Endothelial cell of umbilical vein (primary cell): ENCODE measurements at regions of chr9 and their contacts with region 1.

Region 1: DNA sequence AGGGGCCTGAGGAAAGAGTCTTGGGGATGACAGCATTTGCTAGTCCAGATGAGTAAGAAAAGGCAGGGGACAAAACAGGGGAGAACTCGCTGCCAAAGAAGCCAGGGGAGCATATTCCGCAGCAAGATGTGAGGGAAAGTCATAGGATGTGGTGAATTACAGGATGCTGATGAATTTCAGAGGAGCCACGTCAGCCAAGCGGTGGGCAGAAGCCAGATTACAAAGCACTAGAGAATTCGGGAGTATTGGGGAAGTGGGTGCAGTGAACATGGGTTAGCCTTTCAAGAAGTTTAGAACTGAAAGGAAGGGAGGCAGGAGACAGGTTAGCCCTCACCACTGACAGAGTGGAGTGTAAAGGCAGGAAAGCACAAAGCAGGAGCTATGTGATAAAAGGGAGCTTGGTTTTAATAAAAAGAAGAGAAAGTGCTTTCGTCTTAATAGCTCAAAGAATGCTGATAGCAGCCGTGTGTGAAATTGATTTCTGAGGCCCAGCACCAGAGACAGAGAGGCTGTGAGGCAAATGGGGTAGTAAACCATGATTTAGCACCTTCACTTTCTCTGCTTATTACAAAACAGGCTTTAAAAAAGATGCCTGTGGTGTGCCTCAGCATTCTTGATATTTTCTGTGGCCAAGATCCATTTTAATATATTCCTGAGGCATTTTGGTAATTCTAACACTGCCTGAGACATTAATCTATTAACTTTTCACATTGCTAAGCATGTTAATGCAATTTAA is 16.9 kb downstream of the ADAMTSL1 start:
- DNase-seq: peak; percentile 96
- H3K4me3 ChIP-seq: peak overlapping the region in 2 of 3 experiments; percentile 8 to 25
- H3K27ac ChIP-seq: peak overlapping the region; percentile 96
- H3K4me1 ChIP-seq: peaks cover 50% of the 10 kb centered on the region
- H3K27me3 ChIP-seq: no peaks in the 10 kb centered on the region
- CTCF ChIP-seq: no peak
- POLR2A ChIP-seq: peak; percentile 31

Region 2: GRCh38 chr9:18255158-18255629 is 235.6 kb before region 1 on chr9:
- CTCF ChIA-PET with region 1: interaction called, 11 read pairs
- POLR2A ChIA-PET with region 1: no interaction called
- dilution Hi-C with region 1: no loop called
- intact Hi-C with region 1: no loop called
- DNase-seq: peak; percentile 84
- H3K4me3 ChIP-seq: no peak overlapping the region
- H3K27ac ChIP-seq: no peak overlapping the region
- H3K4me1 ChIP-seq: peaks cover 2% of the 10 kb centered on the region
- H3K27me3 ChIP-seq: no peaks in the 10 kb centered on the region
- CTCF ChIP-seq: peak; percentile 76 to 81
- POLR2A ChIP-seq: no peak

Region 3: GRCh38 chr9:18393340-18394130 is 97.3 kb before region 1 on chr9:
- CTCF ChIA-PET with region 1: interaction called, 3 read pairs
- POLR2A ChIA-PET with region 1: no interaction called
- dilution Hi-C with region 1: no loop called
- intact Hi-C with region 1: loop called (anchors 2 kb)
- DNase-seq: peak; percentile 98
- H3K4me3 ChIP-seq: no peak overlapping the region
- H3K27ac ChIP-seq: peak overlapping the region; percentile 98
- H3K4me1 ChIP-seq: peaks cover 44% of the 10 kb centered on the region
- H3K27me3 ChIP-seq: no peaks in the 10 kb centered on the region
- CTCF ChIP-seq: no peak
- POLR2A ChIP-seq: no peak

Region 4: GRCh38 chr9:18526685-18527084 is 35.9 kb after region 1 on chr9:
- CTCF ChIA-PET with region 1: no interaction called
- POLR2A ChIA-PET with region 1: no interaction called
- dilution Hi-C with region 1: no loop called
- intact Hi-C with region 1: no loop called
- DNase-seq: no peak
- H3K4me3 ChIP-seq: no peak overlapping the region
- H3K27ac ChIP-seq: no peak overlapping the region
- H3K4me1 ChIP-seq: no peaks in the 10 kb centered on the region
- H3K27me3 ChIP-seq: no peaks in the 10 kb centered on the region
- CTCF ChIP-seq: no peak
- POLR2A ChIP-seq: no peak

Region 5: GRCh38 chr9:18566121-18566520 is 75.3 kb after region 1 on chr9:
- CTCF ChIA-PET with region 1: interaction called, 3 read pairs
- POLR2A ChIA-PET with region 1: no interaction called
- dilution Hi-C with region 1: no loop called
- intact Hi-C with region 1: loop called (anchors 2 kb)
- DNase-seq: peak; percentile 92
- H3K4me3 ChIP-seq: no peak overlapping the region
- H3K27ac ChIP-seq: peak overlapping the region; percentile 72
- H3K4me1 ChIP-seq: peaks cover 20% of the 10 kb centered on the region
- H3K27me3 ChIP-seq: no peaks in the 10 kb centered on the region
- CTCF ChIP-seq: no peak
- POLR2A ChIP-seq: no peak

Region 6: DNA sequence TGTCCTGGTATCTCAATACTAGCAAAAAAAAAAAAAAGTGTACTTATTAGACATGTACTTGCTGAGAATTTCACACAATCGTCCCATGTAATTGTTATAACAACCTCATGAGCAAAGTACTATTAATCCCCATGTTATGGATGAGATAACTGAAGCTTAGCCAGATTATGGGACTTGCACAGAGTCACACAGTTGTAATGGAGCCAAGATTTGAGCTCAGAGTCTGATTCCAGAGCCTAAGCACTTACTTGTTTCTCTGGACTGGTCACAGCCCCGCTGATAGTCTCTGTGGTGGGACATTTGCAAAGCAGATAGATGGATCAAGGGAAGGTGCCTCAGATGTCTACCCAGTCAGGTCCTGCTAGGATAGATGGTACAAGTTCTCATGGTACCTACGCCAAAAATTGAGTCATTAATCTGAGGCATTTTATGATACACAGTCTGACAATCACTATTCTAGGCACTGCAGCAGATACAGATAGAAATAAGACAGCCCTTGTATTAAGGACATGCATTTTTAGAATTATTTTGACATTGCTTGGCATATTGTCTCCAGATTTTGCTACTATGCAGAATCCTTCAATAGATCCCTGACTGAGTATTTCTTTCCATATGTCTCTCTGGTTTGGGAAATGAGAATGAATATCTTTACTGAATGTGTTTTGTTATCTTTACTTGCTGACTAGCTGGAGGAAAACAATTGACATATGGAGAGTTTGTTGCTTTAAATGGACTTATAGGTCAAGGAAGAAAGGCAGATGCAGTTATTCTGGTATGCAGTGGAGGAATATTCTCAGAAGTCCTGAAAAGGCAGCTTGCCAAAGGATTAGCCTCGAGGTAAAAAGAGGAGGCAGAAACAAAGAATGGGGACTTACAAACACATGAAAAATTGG is 132.7 kb after region 1 on chr9:
- CTCF ChIA-PET with region 1: no interaction called
- POLR2A ChIA-PET with region 1: no interaction called
- dilution Hi-C with region 1: no loop called
- intact Hi-C with region 1: no loop called
- DNase-seq: no peak
- H3K4me3 ChIP-seq: no peak overlapping the region
- H3K27ac ChIP-seq: no peak overlapping the region
- H3K4me1 ChIP-seq: no peaks in the 10 kb centered on the region
- H3K27me3 ChIP-seq: no peaks in the 10 kb centered on the region
- CTCF ChIP-seq: no peak
- POLR2A ChIP-seq: no peak

Region 7: GRCh38 chr9:18678821-18679590 is 188.2 kb after region 1 on chr9:
- CTCF ChIA-PET with region 1: no interaction called
- POLR2A ChIA-PET with region 1: no interaction called
- dilution Hi-C with region 1: no loop called
- intact Hi-C with region 1: loop called (anchors 5 kb)
- DNase-seq: peak; percentile 62
- H3K4me3 ChIP-seq: no peak overlapping the region
- H3K27ac ChIP-seq: no peak overlapping the region
- H3K4me1 ChIP-seq: peaks cover 2% of the 10 kb centered on the region
- H3K27me3 ChIP-seq: no peaks in the 10 kb centered on the region
- CTCF ChIP-seq: no peak
- POLR2A ChIP-seq: no peak

Region 8: GRCh38 chr9:18969128-18969527 is 478.3 kb after region 1 on chr9:
- CTCF ChIA-PET with region 1: no interaction called
- POLR2A ChIA-PET with region 1: no interaction called
- dilution Hi-C with region 1: no loop called
- intact Hi-C with region 1: no loop called
- DNase-seq: no peak
- H3K4me3 ChIP-seq: no peak overlapping the region
- H3K27ac ChIP-seq: no peak overlapping the region
- H3K4me1 ChIP-seq: no peaks in the 10 kb centered on the region
- H3K27me3 ChIP-seq: peaks cover 7 to 19% of the 10 kb centered on the region in 2 experiments
- CTCF ChIP-seq: no peak
- POLR2A ChIP-seq: no peak

Region 9: DNA sequence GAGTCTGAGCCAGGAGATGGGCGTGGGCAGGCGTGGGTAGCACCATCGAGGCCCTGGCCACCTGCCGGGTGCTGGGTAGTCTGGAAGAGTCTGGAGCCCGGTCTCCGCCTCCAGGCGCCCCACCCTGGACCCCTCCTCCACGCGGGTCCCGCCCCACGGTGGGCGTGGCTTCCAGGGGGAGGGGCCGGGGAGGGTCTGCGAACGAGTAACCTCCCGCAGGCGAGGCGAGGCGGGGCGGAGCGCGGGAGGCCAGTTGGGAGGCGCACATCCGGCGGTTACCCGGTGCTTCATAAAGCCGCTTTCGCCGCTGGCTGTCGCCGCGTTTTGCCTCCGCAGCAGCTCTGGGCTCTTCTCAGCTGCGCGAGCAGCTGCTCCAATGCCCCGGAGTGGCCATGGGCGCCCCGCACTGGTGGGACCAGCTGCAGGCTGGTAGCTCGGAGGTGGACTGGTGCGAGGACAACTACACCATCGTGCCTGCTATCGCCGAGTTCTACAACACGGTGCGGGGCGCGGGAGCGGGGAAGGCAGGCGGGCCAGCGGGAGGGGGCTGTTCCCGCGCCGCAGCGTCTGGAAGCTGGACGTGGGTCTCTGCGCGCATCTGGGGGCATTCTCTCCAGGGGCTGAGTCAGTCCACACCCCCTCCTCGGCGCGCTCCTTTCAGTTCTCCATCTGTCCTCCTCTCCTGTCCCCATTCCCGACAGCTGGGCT is 918.0 kb after region 1 on chr9 and contains the start of gene ACER2:
- CTCF ChIA-PET with region 1: no interaction called
- POLR2A ChIA-PET with region 1: no interaction called
- dilution Hi-C with region 1: no loop called
- intact Hi-C with region 1: loop called (anchors 5 kb)
- DNase-seq: peak; percentile 95
- H3K4me3 ChIP-seq: peak within 1 kb of the TSS; percentile 82 to 91 (median 84)
- H3K27ac ChIP-seq: peak within 1 kb of the TSS; percentile 19
- H3K4me1 ChIP-seq: peaks cover 21% of the 10 kb centered on the region
- H3K27me3 ChIP-seq: no peaks in the 10 kb centered on the region
- CTCF ChIP-seq: peak in 1 of 2 donors; percentile 41
- POLR2A ChIP-seq: peak; percentile 95
- total RNA-seq, gene ACER2: 7.3 and 7.7 TPM in 2 replicates